ENCODE measurements at regions of chr4 and their contacts with region 1.

Region 1: DNA sequence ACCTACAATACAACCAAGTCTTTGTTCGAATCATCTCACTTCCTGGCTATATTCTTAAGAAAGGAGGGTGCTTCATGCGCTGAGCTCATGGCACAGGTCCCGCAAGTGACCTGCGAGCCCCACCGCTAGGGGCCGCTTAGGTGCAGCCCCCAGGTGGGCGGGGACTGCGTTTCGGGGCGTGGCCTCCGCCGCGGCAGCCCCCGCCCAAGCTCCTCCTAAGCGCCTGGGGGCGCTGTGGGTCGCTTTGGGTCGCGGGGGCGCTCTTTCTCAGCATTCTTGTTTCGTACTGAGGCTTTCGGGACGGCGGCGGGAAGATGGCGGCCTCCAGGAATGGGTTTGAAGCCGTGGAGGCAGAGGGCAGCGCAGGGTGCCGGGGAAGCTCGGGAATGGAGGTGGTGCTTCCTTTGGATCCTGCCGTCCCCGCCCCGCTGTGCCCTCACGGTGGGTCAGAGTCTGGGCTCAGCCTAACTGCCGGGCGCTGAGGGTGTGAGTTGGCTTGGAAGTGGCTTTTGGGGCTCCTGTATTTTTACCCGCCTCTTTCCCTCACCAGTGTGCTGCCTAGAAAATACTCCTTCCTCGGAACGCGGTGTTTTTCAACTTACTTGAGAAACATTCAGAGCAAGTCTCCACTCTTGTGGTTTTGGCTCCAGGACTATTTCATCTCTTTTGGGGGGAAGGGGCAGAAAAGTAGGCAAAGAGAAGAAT is at the start of gene ZCCHC4:
- DNase-seq: peak; percentile 82
- H3K4me3 ChIP-seq: peak within 1 kb of the TSS; percentile 92
- H3K27ac ChIP-seq: peak within 1 kb of the TSS; percentile 82
- H3K27me3 ChIP-seq: no peaks in the 10 kb centered on the region
- CTCF ChIP-seq: peak; percentile 99
- polyA plus RNA-seq, gene ZCCHC4: 11.4 and 13.1 TPM in 2 replicates

Region 2: GRCh38 chr4:24722026-24722568 is 590.6 kb before region 1 on chr4:
- CTCF ChIA-PET with region 1: no interaction called
- POLR2A ChIA-PET with region 1: no interaction called
- DNase-seq: no peak
- H3K4me3 ChIP-seq: no peak overlapping the region
- H3K27ac ChIP-seq: no peak overlapping the region
- H3K27me3 ChIP-seq: peaks cover 4% of the 10 kb centered on the region
- CTCF ChIP-seq: no peak

Region 3: GRCh38 chr4:25144870-25145481 is 167.7 kb before region 1 on chr4:
- CTCF ChIA-PET with region 1: interaction called, 10 read pairs
- POLR2A ChIA-PET with region 1: no interaction called
- DNase-seq: no peak
- H3K4me3 ChIP-seq: no peak overlapping the region
- H3K27ac ChIP-seq: no peak overlapping the region
- H3K27me3 ChIP-seq: no peaks in the 10 kb centered on the region
- CTCF ChIP-seq: peak; percentile 75

Region 4: GRCh38 chr4:25172961-25173915 is 139.4 kb before region 1 on chr4:
- CTCF ChIA-PET with region 1: interaction called, 19 read pairs
- POLR2A ChIA-PET with region 1: no interaction called
- DNase-seq: peak; percentile 96
- H3K4me3 ChIP-seq: peak overlapping the region; percentile 17; the same call in 1 of the 2 replicates
- H3K27ac ChIP-seq: peak overlapping the region; percentile 72
- H3K27me3 ChIP-seq: no peaks in the 10 kb centered on the region
- CTCF ChIP-seq: no peak

Region 5: DNA sequence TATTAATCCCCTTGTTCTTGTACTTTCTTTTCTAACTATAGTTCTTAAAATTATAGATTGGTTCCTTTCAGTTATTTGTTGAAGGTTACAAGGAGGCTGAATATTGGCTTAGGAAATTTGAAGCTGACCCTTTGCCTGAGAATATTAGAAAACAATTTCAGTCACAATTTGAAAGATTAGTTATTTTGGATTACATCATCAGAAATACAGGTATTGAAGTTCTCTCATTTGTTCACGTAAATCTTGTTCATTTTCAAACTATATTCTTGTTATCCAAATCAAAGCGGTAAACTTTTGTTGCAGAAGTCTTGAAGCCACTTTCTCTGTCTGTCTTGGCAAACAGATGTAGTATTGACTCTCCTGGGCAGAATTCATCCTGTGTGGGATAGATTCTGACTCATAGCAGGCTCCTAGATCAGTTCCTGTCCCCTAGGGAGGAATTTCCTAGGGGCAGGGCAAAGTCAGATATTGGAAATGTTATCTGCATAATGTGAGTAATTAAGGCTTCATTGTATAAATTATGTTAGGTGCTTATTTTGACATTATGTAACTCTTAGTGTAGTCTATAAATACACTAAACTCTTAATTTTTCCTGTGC is 53.6 kb before region 1 on chr4:
- CTCF ChIA-PET with region 1: interaction called, 12 read pairs
- POLR2A ChIA-PET with region 1: no interaction called
- DNase-seq: no peak
- H3K4me3 ChIP-seq: no peak overlapping the region
- H3K27ac ChIP-seq: no peak overlapping the region
- H3K27me3 ChIP-seq: no peaks in the 10 kb centered on the region
- CTCF ChIP-seq: no peak

Region 6: GRCh38 chr4:25290490-25291067 is 22.1 kb before region 1 on chr4:
- CTCF ChIA-PET with region 1: interaction called, 55 read pairs
- POLR2A ChIA-PET with region 1: no interaction called
- DNase-seq: no peak
- H3K4me3 ChIP-seq: no peak overlapping the region
- H3K27ac ChIP-seq: no peak overlapping the region
- H3K27me3 ChIP-seq: no peaks in the 10 kb centered on the region
- CTCF ChIP-seq: no peak

Region 7: GRCh38 chr4:25351777-25352416 is 39.2 kb after region 1 on chr4:
- CTCF ChIA-PET with region 1: interaction called, 31 read pairs
- POLR2A ChIA-PET with region 1: no interaction called
- DNase-seq: peak; percentile 24
- H3K4me3 ChIP-seq: no peak overlapping the region
- H3K27ac ChIP-seq: no peak overlapping the region
- H3K27me3 ChIP-seq: no peaks in the 10 kb centered on the region
- CTCF ChIP-seq: no peak

Region 8: DNA sequence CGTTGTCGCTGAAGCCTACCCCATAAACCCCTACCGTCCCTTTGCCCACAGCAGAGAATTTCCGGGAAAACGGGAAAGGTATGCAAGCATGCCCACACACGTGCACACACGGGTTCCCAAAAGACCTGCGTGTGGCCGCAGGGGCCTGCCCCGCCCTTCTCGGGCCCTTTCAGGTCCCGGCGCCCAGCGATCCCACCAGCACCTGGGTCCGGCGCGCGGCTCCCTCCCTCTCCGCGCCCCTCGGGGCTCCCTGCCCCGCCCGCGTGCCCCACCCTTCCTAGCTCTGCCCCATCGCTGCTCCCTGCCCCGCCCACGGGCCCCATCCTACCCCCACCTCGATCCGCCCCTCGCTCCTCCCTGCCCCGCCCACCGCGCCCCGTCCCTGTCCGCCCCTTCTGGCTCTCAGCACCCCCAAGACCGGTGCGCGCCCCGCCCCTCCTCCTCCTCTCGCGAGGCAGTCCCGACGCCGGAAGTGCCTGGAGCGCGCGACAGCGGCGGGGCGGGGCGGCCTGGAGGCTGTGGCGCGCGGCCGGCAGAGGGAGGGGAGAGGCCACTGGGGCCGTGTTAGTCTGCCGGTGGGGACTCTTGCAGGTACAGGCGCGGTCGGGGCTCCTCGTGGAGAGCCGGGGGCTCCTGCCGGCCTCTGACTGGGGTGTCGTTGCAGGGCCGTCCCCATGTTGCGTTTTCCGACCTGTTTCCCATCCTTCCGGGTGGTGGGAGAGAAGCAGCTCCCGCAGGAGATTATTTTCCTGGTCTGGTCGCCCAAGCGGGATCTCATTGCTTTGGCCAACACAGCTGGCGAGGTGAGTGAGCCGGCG is 64.3 kb after region 1 on chr4 and contains the start of gene ANAPC4:
- CTCF ChIA-PET with region 1: interaction called, 10 read pairs
- POLR2A ChIA-PET with region 1: no interaction called
- DNase-seq: peak; percentile 71
- H3K4me3 ChIP-seq: peak within 1 kb of the TSS; percentile 92
- H3K27ac ChIP-seq: peak within 1 kb of the TSS; percentile 31
- H3K27me3 ChIP-seq: no peaks in the 10 kb centered on the region
- CTCF ChIP-seq: 0 out of 2 replicates have a peak, but pooled peaks have one; percentile 7
- polyA plus RNA-seq, gene ANAPC4: 17.3 and 26.2 TPM in 2 replicates

Region 9: GRCh38 chr4:25621027-25621930 is 308.6 kb after region 1 on chr4:
- CTCF ChIA-PET with region 1: no interaction called
- POLR2A ChIA-PET with region 1: no interaction called
- DNase-seq: no peak
- H3K4me3 ChIP-seq: no peak overlapping the region
- H3K27ac ChIP-seq: no peak overlapping the region
- H3K27me3 ChIP-seq: peaks cover 2% of the 10 kb centered on the region
- CTCF ChIP-seq: no peak

Region 10: GRCh38 chr4:25667931-25668557 is 355.4 kb after region 1 on chr4:
- CTCF ChIA-PET with region 1: no interaction called
- POLR2A ChIA-PET with region 1: no interaction called
- DNase-seq: no peak
- H3K4me3 ChIP-seq: no peak overlapping the region
- H3K27ac ChIP-seq: no peak overlapping the region
- H3K27me3 ChIP-seq: peaks cover 11% of the 10 kb centered on the region
- CTCF ChIP-seq: no peak

Measured in AG04450 (cell line).